B cell (primary cell): ENCODE measurements at regions of chr9 and their contacts with region 1.

Region 1: DNA sequence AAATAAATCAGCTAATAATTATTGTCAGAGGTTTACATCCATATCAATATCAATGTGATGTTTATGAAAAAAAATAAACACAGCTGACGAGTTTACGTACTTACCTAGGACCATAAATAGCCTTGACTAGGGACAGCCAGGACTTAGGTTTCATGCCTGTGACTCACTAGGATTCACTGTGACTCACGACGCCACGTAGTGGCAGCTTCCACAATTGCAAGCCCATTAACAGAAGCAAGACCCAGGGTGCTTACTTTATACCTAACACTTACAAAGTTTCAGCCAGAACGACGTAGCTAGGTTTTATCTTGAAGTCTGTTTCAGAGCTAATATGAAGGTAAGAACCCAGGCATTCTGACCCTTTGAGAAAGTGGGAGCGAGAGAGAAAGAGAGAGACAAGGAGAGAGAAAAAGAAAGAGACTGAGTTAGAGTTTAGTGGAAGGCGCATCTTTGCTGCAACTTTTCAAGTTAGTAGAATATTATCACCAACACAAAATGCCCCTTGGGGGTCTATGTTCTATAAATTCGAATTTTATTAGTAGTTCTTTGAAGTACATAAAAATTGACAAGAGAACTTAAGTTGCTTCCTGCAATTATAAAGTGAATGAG is 191.2 kb downstream of the GNA14 start:
- DNase-seq: peak; percentile 77
- ATAC-seq: peak; percentile 80
- H3K4me3 ChIP-seq: no peak overlapping the region
- H3K4me3 Mint-ChIP-seq: no peak overlapping the region
- H3K27ac ChIP-seq: no peak overlapping the region
- H3K27ac Mint-ChIP-seq: no peak overlapping the region
- H3K4me1 ChIP-seq: peaks cover 0 to 4% of the 10 kb centered on the region in 2 donors
- H3K4me1 Mint-ChIP-seq: peaks cover 10% of the 10 kb centered on the region
- H3K27me3 ChIP-seq: peaks cover 0 to 6% (median 0%) of the 10 kb centered on the region in 4 experiments
- H3K27me3 Mint-ChIP-seq: peaks cover 6% of the 10 kb centered on the region
- CTCF ChIP-seq: peak; percentile 94

Region 2: GRCh38 chr9:77433675-77434445 is 23.1 kb before region 1 on chr9:
- CTCF ChIA-PET with region 1: interaction called, 13 read pairs
- POLR2A ChIA-PET with region 1: no interaction called
- intact Hi-C with region 1: no loop called
- DNase-seq: peak; percentile 42
- ATAC-seq: no peak
- H3K4me3 ChIP-seq: no peak overlapping the region
- H3K4me3 Mint-ChIP-seq: no peak overlapping the region
- H3K27ac ChIP-seq: no peak overlapping the region
- H3K27ac Mint-ChIP-seq: no peak overlapping the region
- H3K4me1 ChIP-seq: no peaks in the 10 kb centered on the region
- H3K4me1 Mint-ChIP-seq: no peaks in the 10 kb centered on the region
- H3K27me3 ChIP-seq: peaks cover 0 to 2% (median 0%) of the 10 kb centered on the region in 4 experiments
- H3K27me3 Mint-ChIP-seq: peaks cover 17% of the 10 kb centered on the region
- CTCF ChIP-seq: peak; percentile 72

Region 3: GRCh38 chr9:77469515-77470231 is 12.7 kb after region 1 on chr9:
- CTCF ChIA-PET with region 1: interaction called, 30 read pairs
- POLR2A ChIA-PET with region 1: no interaction called
- intact Hi-C with region 1: no loop called
- DNase-seq: no peak
- ATAC-seq: no peak
- H3K4me3 ChIP-seq: no peak overlapping the region
- H3K4me3 Mint-ChIP-seq: no peak overlapping the region
- H3K27ac ChIP-seq: no peak overlapping the region
- H3K27ac Mint-ChIP-seq: no peak overlapping the region
- H3K4me1 ChIP-seq: no peaks in the 10 kb centered on the region
- H3K4me1 Mint-ChIP-seq: no peaks in the 10 kb centered on the region
- H3K27me3 ChIP-seq: peaks cover 0 to 3% (median 1%) of the 10 kb centered on the region in 4 experiments
- H3K27me3 Mint-ChIP-seq: peaks cover 16% of the 10 kb centered on the region
- CTCF ChIP-seq: no peak

Region 4: GRCh38 chr9:78121488-78121887 is 664.6 kb after region 1 on chr9:
- CTCF ChIA-PET with region 1: no interaction called
- POLR2A ChIA-PET with region 1: no interaction called
- intact Hi-C with region 1: loop called (anchors 10 kb)
- DNase-seq: peak; percentile 37
- ATAC-seq: no peak
- H3K4me3 ChIP-seq: no peak overlapping the region
- H3K4me3 Mint-ChIP-seq: no peak overlapping the region
- H3K27ac ChIP-seq: no peak overlapping the region
- H3K27ac Mint-ChIP-seq: no peak overlapping the region
- H3K4me1 ChIP-seq: peaks cover 12 to 13% of the 10 kb centered on the region in 2 donors
- H3K4me1 Mint-ChIP-seq: peaks cover 17% of the 10 kb centered on the region
- H3K27me3 ChIP-seq: peaks cover 0 to 47% (median 36%) of the 10 kb centered on the region in 4 experiments
- H3K27me3 Mint-ChIP-seq: peaks cover 64% of the 10 kb centered on the region
- CTCF ChIP-seq: peak; percentile 25

Region 5: GRCh38 chr9:78958892-78959291 is 1502.0 kb after region 1 on chr9:
- CTCF ChIA-PET with region 1: no interaction called
- POLR2A ChIA-PET with region 1: no interaction called
- intact Hi-C with region 1: no loop called
- DNase-seq: no peak
- ATAC-seq: no peak
- H3K4me3 ChIP-seq: no peak overlapping the region
- H3K4me3 Mint-ChIP-seq: no peak overlapping the region
- H3K27ac ChIP-seq: no peak overlapping the region
- H3K27ac Mint-ChIP-seq: no peak overlapping the region
- H3K4me1 ChIP-seq: no peaks in the 10 kb centered on the region
- H3K4me1 Mint-ChIP-seq: no peaks in the 10 kb centered on the region
- H3K27me3 ChIP-seq: no peaks in the 10 kb centered on the region
- H3K27me3 Mint-ChIP-seq: no peaks in the 10 kb centered on the region
- CTCF ChIP-seq: no peak